Activated CD4-positive, alpha-beta memory T cell treated with anti-CD3 and anti-CD28 coated beads for 36 hours (primary cell): ENCODE measurements at regions of chrX and their contacts with region 1.

Region 1: DNA sequence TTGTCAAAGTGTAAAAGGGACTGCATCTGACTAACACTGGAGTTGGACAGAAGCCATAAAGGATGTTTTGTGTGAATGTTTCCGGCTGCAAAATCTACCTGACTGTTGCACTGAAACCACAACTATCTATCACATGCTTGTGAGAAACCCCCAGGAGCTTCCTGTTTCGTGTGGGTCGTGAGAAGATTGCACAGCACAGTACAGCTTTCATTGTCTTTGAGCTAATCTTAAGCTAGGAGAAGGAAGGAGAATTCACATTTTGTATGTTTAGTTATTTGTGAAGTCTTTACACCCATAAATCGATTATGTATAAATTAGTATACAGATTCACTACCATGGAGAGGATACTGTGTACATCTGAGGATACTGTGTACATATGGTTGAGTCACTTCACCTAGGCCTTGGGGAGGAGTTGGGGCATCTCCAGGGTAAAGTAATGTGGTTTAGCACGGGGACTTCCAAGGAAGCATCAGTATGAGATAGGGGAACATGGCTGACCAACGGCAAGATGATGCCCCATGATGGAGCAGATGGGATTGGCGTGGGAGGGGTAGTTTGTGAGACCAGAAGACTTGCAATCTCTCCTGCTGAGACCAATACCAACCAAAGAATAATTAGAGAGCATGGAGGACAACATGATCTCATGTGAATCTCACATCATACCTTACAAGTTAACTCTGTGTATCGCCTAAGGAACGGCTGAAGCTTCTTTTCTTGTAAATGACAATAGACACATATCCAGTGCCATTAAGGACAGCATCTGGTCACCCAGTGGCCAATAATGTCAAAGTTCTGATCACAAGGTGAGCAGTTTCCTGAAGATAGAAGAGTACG is 43.1 kb upstream of the FAM9C start:
- DNase-seq: peak; percentile 76
- H3K4me3 Mint-ChIP-seq: peak overlapping the region; percentile 77
- H3K27ac Mint-ChIP-seq: peak overlapping the region; percentile 99
- H3K4me1 Mint-ChIP-seq: peaks cover 67% of the 10 kb centered on the region
- H3K27me3 Mint-ChIP-seq: no peaks in the 10 kb centered on the region

Region 2: GRCh38 chrX:12984629-12985319 is 102.8 kb before region 1 on chrX:
- CTCF ChIA-PET with region 1: interaction called, 17 read pairs
- POLR2A ChIA-PET with region 1: interaction called, 192 read pairs
- intact Hi-C with region 1: no loop called
- DNase-seq: peak; percentile 65
- H3K4me3 Mint-ChIP-seq: peak overlapping the region; percentile 50
- H3K27ac Mint-ChIP-seq: peak overlapping the region; percentile 94
- H3K4me1 Mint-ChIP-seq: peaks cover 75% of the 10 kb centered on the region
- H3K27me3 Mint-ChIP-seq: no peaks in the 10 kb centered on the region

Region 3: GRCh38 chrX:13033193-13033592 is 54.3 kb before region 1 on chrX:
- CTCF ChIA-PET with region 1: no interaction called
- POLR2A ChIA-PET with region 1: no interaction called
- intact Hi-C with region 1: no loop called
- DNase-seq: no peak
- H3K4me3 Mint-ChIP-seq: no peak overlapping the region
- H3K27ac Mint-ChIP-seq: no peak overlapping the region
- H3K4me1 Mint-ChIP-seq: peaks cover 53% of the 10 kb centered on the region
- H3K27me3 Mint-ChIP-seq: no peaks in the 10 kb centered on the region

Region 4: GRCh38 chrX:13051529-13052172 is 35.9 kb before region 1 on chrX:
- CTCF ChIA-PET with region 1: interaction called, 7 read pairs
- POLR2A ChIA-PET with region 1: interaction called, 11 read pairs
- intact Hi-C with region 1: loop called (anchors 1 kb)
- DNase-seq: peak; percentile 20
- H3K4me3 Mint-ChIP-seq: peak overlapping the region; percentile 4
- H3K27ac Mint-ChIP-seq: peak overlapping the region; percentile 95
- H3K4me1 Mint-ChIP-seq: peaks cover 72% of the 10 kb centered on the region
- H3K27me3 Mint-ChIP-seq: no peaks in the 10 kb centered on the region

Region 5: GRCh38 chrX:13194291-13195103 is 107.0 kb after region 1 on chrX:
- CTCF ChIA-PET with region 1: no interaction called
- POLR2A ChIA-PET with region 1: no interaction called
- intact Hi-C with region 1: no loop called
- DNase-seq: no peak
- H3K4me3 Mint-ChIP-seq: no peak overlapping the region
- H3K27ac Mint-ChIP-seq: no peak overlapping the region
- H3K4me1 Mint-ChIP-seq: peaks cover 3% of the 10 kb centered on the region
- H3K27me3 Mint-ChIP-seq: no peaks in the 10 kb centered on the region

Region 6: GRCh38 chrX:13376857-13377549 is 289.5 kb after region 1 on chrX:
- CTCF ChIA-PET with region 1: no interaction called
- POLR2A ChIA-PET with region 1: no interaction called
- intact Hi-C with region 1: loop called (anchors 2 kb)
- DNase-seq: peak; percentile 31
- H3K4me3 Mint-ChIP-seq: no peak overlapping the region
- H3K27ac Mint-ChIP-seq: no peak overlapping the region
- H3K4me1 Mint-ChIP-seq: peaks cover 35% of the 10 kb centered on the region
- H3K27me3 Mint-ChIP-seq: no peaks in the 10 kb centered on the region

Region 7: DNA sequence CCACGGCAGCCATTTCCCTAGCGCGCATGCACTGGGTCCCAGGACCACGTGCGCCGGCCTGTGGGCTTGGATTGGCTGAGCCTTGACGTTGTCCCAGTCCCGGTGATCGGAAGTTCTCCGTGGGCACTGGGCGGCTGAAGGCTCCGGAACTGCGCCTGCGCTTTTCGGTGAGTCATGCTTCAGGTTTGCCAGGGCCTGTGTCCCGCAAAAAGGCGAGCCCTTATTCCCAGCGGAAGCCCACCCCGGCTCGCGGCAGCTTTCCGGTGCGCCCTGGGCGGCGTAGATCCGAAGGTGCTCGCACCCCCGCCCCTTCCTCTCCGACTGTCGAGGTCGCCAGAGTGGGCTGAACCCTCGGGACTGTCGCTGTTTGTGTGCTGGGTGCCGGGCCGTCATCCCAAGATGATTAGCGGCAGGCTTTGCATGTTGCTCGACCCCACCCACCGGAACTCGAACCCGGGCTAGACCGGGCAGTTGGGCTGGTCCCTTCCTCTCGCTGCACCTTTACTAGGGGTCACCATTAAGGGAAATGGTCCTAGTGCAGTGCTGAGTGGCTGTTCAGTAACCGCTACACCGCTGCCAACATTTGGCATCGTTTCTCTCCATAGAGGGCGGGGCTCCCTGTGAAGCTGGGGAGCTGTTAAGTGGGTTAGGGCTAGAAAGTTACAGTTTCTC is 565.6 kb after region 1 on chrX and contains the start of gene TCEANC:
- CTCF ChIA-PET with region 1: no interaction called
- POLR2A ChIA-PET with region 1: no interaction called
- intact Hi-C with region 1: loop called (anchors 5 kb)
- DNase-seq: peak; percentile 96
- H3K4me3 Mint-ChIP-seq: peak within 1 kb of the TSS; percentile 84
- H3K27ac Mint-ChIP-seq: peak within 1 kb of the TSS; percentile 93
- H3K4me1 Mint-ChIP-seq: peaks cover 22% of the 10 kb centered on the region
- H3K27me3 Mint-ChIP-seq: no peaks in the 10 kb centered on the region
- total RNA-seq, gene TCEANC: 1.9 TPM